Left colon (tissue), 2 donors: ENCODE measurements at regions of chr20 and their contacts with region 1.

Region 1: DNA sequence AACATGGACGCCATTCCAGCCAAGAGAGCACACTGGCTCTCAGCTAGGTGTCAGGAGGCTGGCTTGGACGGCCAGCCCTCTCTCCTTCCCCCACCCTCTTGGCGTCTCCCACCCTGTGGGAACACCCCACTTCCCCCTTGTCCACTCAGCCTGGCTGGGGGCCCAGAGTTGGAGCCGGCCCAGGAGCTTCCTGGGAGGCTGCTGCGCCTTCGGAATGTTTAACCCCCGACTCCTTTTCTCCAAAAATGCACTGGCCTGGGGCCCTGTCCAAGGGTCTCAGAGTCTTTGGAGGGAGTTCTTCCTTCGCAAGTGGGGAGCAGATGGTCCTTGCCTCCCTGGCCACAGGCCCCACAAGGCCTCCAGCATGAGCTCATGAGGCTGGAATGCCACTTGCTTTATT is 4.1 kb downstream of the ADAM33 start:
- DNase-seq: peak; percentile 33 to 54
- ATAC-seq: no peak

Region 2: DNA sequence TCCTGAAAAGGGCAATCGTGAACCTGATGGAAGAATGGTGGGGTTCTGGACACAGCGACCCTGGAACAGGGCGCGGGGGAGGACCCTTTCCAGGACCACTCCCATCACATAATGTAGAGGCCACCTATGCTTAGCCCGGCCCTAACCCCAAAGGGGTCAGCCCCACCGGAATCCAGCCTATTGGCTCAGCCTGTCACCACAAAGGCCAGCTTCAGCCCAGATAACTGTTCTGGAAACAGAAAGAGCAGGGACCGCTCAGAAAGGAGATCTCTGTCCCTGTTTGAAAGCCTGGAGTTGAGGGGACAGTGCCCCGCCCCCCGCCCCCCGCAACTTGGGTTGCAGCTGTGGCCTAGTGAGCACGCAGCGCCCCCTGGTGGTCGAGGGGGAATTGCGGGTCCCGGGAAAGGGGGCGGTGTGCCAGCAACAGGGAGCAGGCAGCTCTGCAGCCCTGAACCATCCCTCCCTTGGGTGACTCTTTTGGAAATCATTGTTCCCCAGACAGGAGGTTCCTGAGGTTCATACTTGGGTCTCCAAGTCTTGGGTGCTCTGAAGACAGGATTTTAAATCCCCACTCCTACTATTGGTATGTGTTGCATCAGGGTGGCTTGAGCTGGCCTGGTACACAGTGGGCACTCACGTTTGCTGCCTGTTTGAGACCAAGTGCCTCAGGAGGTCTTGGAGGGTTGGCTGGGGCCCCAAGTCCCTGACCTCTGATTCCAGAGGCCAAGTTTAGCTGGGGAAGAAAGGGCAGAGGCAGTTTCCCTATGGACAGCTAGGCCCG is 33.2 kb after region 1 on chr20:
- intact Hi-C with region 1: loop called in 1 of 2 experiments (anchors 2 kb)
- DNase-seq: peak in 1 of 2 donors; percentile 75
- ATAC-seq: peak; percentile 62